CD4-positive, alpha-beta memory T cell (primary cell): ENCODE measurements at regions of chr5 and their contacts with region 1.

Region 1: GRCh38 chr5:1799602-1800471 is at the start of gene MRPL36:
- DNase-seq: peak; percentile 84 to 92 (median 88)
- H3K4me3 ChIP-seq: peak within 1 kb of the TSS; percentile 93 to 97
- H3K4me3 Mint-ChIP-seq: peak within 1 kb of the TSS; percentile 94 to 99 (median 96)
- H3K27ac ChIP-seq: peak within 1 kb of the TSS; percentile 91
- H3K27ac Mint-ChIP-seq: peak within 1 kb of the TSS; percentile 92 to 100 (median 99)
- H3K4me1 ChIP-seq: peaks cover 61% of the 10 kb centered on the region
- H3K4me1 Mint-ChIP-seq: peaks cover 28 to 76% (median 48%) of the 10 kb centered on the region in 4 donors
- H3K27me3 ChIP-seq: no peaks in the 10 kb centered on the region
- H3K27me3 Mint-ChIP-seq: no peaks in the 10 kb centered on the region
- total RNA-seq, gene MRPL36: 30.7 to 34.8 TPM

Region 2: GRCh38 chr5:1772634-1773033 is 27.2 kb before region 1 on chr5:
- CTCF ChIA-PET with region 1: interaction called, 10 read pairs
- POLR2A ChIA-PET with region 1: interaction called, 6 read pairs
- intact Hi-C with region 1: loop called (anchors 2 kb)
- DNase-seq: no peak
- H3K4me3 ChIP-seq: no peak overlapping the region
- H3K4me3 Mint-ChIP-seq: no peak overlapping the region
- H3K27ac ChIP-seq: no peak overlapping the region
- H3K27ac Mint-ChIP-seq: no peak overlapping the region
- H3K4me1 ChIP-seq: no peaks in the 10 kb centered on the region
- H3K4me1 Mint-ChIP-seq: peaks cover 0 to 3% (median 0%) of the 10 kb centered on the region in 4 donors
- H3K27me3 ChIP-seq: no peaks in the 10 kb centered on the region
- H3K27me3 Mint-ChIP-seq: peaks cover 0 to 2% of the 10 kb centered on the region in 2 donors

Region 3: GRCh38 chr5:1840741-1841521 is 41.1 kb after region 1 on chr5:
- CTCF ChIA-PET with region 1: no interaction called
- POLR2A ChIA-PET with region 1: no interaction called
- intact Hi-C with region 1: no loop called
- DNase-seq: no peak
- H3K4me3 ChIP-seq: no peak overlapping the region
- H3K4me3 Mint-ChIP-seq: no peak overlapping the region
- H3K27ac ChIP-seq: no peak overlapping the region
- H3K27ac Mint-ChIP-seq: peak overlapping the region in 1 of 7 donors; percentile 36
- H3K4me1 ChIP-seq: no peaks in the 10 kb centered on the region
- H3K4me1 Mint-ChIP-seq: peaks cover 0 to 2% (median 0%) of the 10 kb centered on the region in 4 donors
- H3K27me3 ChIP-seq: no peaks in the 10 kb centered on the region
- H3K27me3 Mint-ChIP-seq: peaks cover 12 to 20% of the 10 kb centered on the region in 2 donors

Region 4: DNA sequence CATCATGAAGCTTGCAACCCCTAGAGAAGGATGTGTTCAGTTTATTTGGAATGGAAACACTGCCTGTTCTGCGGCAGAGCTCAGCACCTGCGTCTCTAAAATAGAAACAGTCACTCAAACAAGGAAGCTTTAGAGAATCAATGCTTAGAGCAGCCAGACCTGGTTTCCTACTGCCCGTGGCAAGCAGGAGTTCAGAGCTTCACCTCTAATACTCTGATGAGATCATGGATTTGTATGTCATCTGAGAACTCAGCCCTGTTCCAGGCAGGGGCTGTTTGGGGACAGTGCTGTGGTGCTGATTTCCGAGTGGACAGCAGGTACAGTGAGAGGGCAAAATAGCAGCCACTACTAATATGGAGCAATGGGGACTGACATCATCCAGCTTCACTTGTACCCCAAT is 1559.8 kb after region 1 on chr5:
- CTCF ChIA-PET with region 1: no interaction called
- POLR2A ChIA-PET with region 1: no interaction called
- intact Hi-C with region 1: no loop called
- DNase-seq: no peak
- H3K4me3 ChIP-seq: no peak overlapping the region
- H3K4me3 Mint-ChIP-seq: no peak overlapping the region
- H3K27ac ChIP-seq: no peak overlapping the region
- H3K27ac Mint-ChIP-seq: no peak overlapping the region
- H3K4me1 ChIP-seq: no peaks in the 10 kb centered on the region
- H3K4me1 Mint-ChIP-seq: no peaks in the 10 kb centered on the region
- H3K27me3 ChIP-seq: no peaks in the 10 kb centered on the region
- H3K27me3 Mint-ChIP-seq: no peaks in the 10 kb centered on the region